GM12878 (cell line): ENCODE measurements at regions of chr10 and their contacts with region 1.

Region 1: DNA sequence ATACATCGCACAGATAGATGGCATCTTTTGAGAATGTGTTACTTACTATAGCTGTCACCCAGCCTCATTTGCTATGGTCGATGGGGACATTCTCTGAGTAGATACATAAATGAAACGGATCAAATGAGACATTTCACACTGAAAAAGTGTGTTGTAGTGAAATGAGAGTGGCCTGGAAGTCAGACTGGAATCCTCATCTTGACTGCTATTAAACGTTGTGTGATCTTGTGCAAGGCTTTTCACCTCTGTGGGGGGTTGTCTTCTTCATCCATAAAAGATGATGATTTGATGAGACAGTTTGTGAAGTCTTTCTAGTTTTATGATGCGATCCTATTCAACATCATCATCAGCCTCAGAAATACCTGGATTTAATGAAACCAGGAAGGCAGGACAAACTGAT is 155.4 kb upstream of the MYO3A start:
- DNase-seq: no peak
- ATAC-seq: no peak
- H3K4me3 ChIP-seq: no peak overlapping the region
- H3K27ac ChIP-seq: no peak overlapping the region
- H3K4me1 ChIP-seq: no peaks in the 10 kb centered on the region
- H3K27me3 ChIP-seq: no peaks in the 10 kb centered on the region
- CTCF ChIP-seq: no peak
- EP300 ChIP-seq: no peak
- POLR2A ChIP-seq: no peak
- RAD21 ChIP-seq: no peak

Region 2: DNA sequence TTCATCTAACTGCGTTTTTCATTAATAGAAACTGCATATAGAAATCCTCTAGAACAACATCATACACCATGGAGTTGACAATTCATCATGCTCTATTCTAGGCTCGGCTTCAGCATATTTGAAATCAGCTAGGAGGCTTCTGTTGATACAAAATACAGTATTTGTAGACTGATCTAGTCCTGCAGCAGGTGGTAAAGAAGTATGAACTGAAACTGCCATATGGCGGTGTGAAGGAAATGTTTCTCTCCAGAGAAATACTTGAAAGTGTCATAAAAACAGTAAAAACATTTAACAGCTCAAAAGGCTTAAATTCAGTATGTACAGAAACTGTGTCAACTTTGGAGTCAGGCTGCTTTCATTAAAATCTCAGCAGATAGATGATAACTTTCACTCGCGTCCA is 123.4 kb after region 1 on chr10:
- CTCF ChIA-PET with region 1: no interaction called
- POLR2A ChIA-PET with region 1: no interaction called
- RAD21 ChIA-PET with region 1: no interaction called
- SMC1A ChIA-PET with region 1: no interaction called
- in situ Hi-C with region 1: no loop called
- intact Hi-C with region 1: no loop called
- DNase-seq: no peak
- ATAC-seq: no peak
- H3K4me3 ChIP-seq: no peak overlapping the region
- H3K27ac ChIP-seq: no peak overlapping the region
- H3K4me1 ChIP-seq: peaks cover 10% of the 10 kb centered on the region
- H3K27me3 ChIP-seq: no peaks in the 10 kb centered on the region
- CTCF ChIP-seq: no peak
- EP300 ChIP-seq: no peak
- POLR2A ChIP-seq: no peak
- RAD21 ChIP-seq: no peak

Region 3: GRCh38 chr10:27464993-27465392 is 1686.3 kb after region 1 on chr10:
- CTCF ChIA-PET with region 1: no interaction called
- POLR2A ChIA-PET with region 1: no interaction called
- RAD21 ChIA-PET with region 1: no interaction called
- SMC1A ChIA-PET with region 1: no interaction called
- in situ Hi-C with region 1: loop called (anchors 10 kb)
- intact Hi-C with region 1: no loop called
- DNase-seq: peak; percentile 12
- ATAC-seq: no peak; the same call in 2 of the 3 replicates
- H3K4me3 ChIP-seq: no peak overlapping the region
- H3K27ac ChIP-seq: no peak overlapping the region
- H3K4me1 ChIP-seq: no peaks in the 10 kb centered on the region
- H3K27me3 ChIP-seq: no peaks in the 10 kb centered on the region
- CTCF ChIP-seq: no peak
- EP300 ChIP-seq: no peak
- POLR2A ChIP-seq: no peak
- RAD21 ChIP-seq: no peak